Caco-2 (cell line): ENCODE measurements at regions of chr10 and their contacts with region 1.

Region 1: DNA sequence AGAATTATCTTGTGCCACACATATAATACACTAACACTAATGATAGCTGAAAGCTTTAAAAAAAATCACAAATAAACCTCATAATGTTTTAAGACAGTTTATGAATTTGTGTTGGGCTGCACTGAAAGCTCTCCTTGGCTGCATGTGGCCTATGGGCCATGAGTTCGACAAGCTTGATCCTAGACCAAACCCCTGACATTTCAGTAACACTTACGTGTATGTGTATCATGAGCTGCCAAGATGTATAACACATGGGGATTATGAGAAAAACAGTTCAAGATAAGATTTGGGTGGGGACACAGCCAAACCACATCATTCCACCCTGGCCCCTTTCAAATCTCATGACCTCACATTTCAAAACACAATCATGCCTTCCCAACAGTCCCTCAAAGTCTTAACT is 823.8 kb downstream of the PCDH15 start:
- DNase-seq: no peak
- H3K4me3 ChIP-seq: no peak overlapping the region
- H3K4me3 Mint-ChIP-seq: no peak overlapping the region
- H3K27ac Mint-ChIP-seq: no peak overlapping the region
- H3K4me1 ChIP-seq: no peaks in the 10 kb centered on the region
- H3K4me1 Mint-ChIP-seq: no peaks in the 10 kb centered on the region
- H3K27me3 ChIP-seq: no peaks in the 10 kb centered on the region
- H3K27me3 Mint-ChIP-seq: no peaks in the 10 kb centered on the region
- CTCF ChIP-seq: no peak

Region 2: GRCh38 chr10:53930648-53931047 is 46.6 kb before region 1 on chr10:
- CTCF ChIA-PET with region 1: no interaction called
- POLR2A ChIA-PET with region 1: no interaction called
- intact Hi-C with region 1: loop called (anchors 5 kb)
- DNase-seq: no peak
- H3K4me3 ChIP-seq: no peak overlapping the region
- H3K4me3 Mint-ChIP-seq: no peak overlapping the region
- H3K27ac Mint-ChIP-seq: no peak overlapping the region
- H3K4me1 ChIP-seq: no peaks in the 10 kb centered on the region
- H3K4me1 Mint-ChIP-seq: no peaks in the 10 kb centered on the region
- H3K27me3 ChIP-seq: no peaks in the 10 kb centered on the region
- H3K27me3 Mint-ChIP-seq: no peaks in the 10 kb centered on the region
- CTCF ChIP-seq: no peak